MCF 10A (cell line): ENCODE measurements at regions of chr2 and their contacts with region 1.

Region 1: DNA sequence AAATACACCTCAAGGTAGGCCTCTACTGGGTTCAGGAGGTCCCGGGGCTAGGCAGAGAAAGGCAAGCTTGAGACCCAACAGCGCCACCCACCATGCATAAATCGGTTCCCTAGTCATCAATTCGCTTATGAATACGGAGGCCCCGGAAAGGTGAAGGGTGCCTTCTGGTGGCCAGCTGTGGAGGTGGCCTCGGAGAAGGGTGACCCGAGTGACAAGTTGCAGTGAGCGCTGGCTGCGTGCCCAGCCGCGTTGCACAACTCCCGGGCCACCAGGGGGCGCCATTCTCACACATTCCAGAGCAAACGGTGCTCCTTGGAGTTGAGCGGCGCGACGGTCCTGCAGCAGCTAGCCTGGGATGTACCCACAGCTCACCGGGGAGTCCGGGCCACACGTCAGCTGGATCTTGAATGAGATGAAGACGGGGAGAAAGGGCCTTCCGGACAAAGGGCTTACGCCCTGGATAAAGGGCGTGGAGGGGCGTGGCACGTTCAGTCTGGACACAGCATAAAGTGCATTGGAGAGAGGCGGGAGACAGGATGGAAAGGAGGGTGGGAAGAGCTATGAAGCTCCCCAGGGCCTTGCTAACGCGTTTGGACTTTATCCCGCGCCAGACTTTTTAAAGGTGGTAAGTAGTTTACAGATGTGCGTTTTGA is 20.4 kb downstream of the TMSB10 start:
- DNase-seq: peak; percentile 97
- H3K4me3 Mint-ChIP-seq: peak overlapping the region; percentile 71
- H3K27ac Mint-ChIP-seq: peak overlapping the region; percentile 28
- H3K4me1 Mint-ChIP-seq: peaks cover 32% of the 10 kb centered on the region
- H3K27me3 Mint-ChIP-seq: no peaks in the 10 kb centered on the region
- CTCF ChIP-seq: peak; percentile 96

Region 2: GRCh38 chr2:84631047-84631446 is 294.8 kb before region 1 on chr2:
- CTCF ChIA-PET with region 1: no interaction called
- POLR2A ChIA-PET with region 1: no interaction called
- intact Hi-C with region 1: loop called (anchors 1 kb)
- DNase-seq: peak; percentile 47
- H3K4me3 Mint-ChIP-seq: no peak overlapping the region
- H3K27ac Mint-ChIP-seq: no peak overlapping the region
- H3K4me1 Mint-ChIP-seq: peaks cover 5% of the 10 kb centered on the region
- H3K27me3 Mint-ChIP-seq: no peaks in the 10 kb centered on the region
- CTCF ChIP-seq: peak; percentile 70

Region 3: GRCh38 chr2:84894758-84895520 is 30.9 kb before region 1 on chr2:
- CTCF ChIA-PET with region 1: interaction called, 17 read pairs
- POLR2A ChIA-PET with region 1: interaction called, 15 read pairs
- intact Hi-C with region 1: no loop called
- DNase-seq: peak; percentile 55
- H3K4me3 Mint-ChIP-seq: no peak overlapping the region
- H3K27ac Mint-ChIP-seq: peak overlapping the region; percentile 41
- H3K4me1 Mint-ChIP-seq: peaks cover 30% of the 10 kb centered on the region
- H3K27me3 Mint-ChIP-seq: no peaks in the 10 kb centered on the region
- CTCF ChIP-seq: no peak

Region 4: DNA sequence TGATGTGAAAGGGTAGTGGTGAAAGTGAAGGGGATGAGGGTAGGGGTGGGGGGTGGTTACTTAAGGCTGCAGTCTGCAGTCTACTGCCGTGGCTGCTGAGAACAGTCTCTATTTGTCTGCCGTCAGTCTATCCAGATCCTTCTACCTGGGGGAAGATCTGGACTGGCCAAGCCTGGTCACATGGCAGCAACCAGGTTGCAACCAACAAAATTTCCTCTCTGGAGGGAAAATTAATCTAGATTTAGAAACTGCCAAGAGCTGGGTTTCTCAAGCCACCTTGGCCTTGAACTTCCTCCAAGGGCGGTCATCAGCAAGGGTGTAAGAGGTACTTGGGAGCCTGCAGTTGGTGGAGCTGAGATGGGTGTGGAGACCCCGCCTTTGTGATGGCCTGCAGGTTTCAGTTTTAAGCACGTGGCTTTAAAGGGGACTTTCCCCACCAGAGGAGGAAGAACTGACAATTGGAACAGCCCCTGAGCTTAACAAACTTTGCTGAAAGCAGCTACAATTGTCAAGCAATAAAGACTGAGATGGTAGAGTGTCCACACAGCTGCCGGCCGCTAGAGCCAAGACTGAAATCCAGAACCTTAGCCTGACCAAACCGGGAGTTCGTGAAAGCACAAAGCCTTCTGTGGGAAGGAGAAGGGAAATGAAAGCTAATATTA is 13.7 kb after region 1 on chr2:
- CTCF ChIA-PET with region 1: interaction called, 64 read pairs
- POLR2A ChIA-PET with region 1: interaction called, 4 read pairs
- intact Hi-C with region 1: no loop called
- DNase-seq: no peak
- H3K4me3 Mint-ChIP-seq: no peak overlapping the region
- H3K27ac Mint-ChIP-seq: peak overlapping the region; percentile 54
- H3K4me1 Mint-ChIP-seq: peaks cover 11% of the 10 kb centered on the region
- H3K27me3 Mint-ChIP-seq: no peaks in the 10 kb centered on the region
- CTCF ChIP-seq: no peak

Region 5: GRCh38 chr2:84970868-84971509 is 45.1 kb after region 1 on chr2 and contains the start of gene KCMF1:
- CTCF ChIA-PET with region 1: interaction called, 23 read pairs
- POLR2A ChIA-PET with region 1: interaction called, 46 read pairs
- intact Hi-C with region 1: loop called (anchors 2 kb)
- DNase-seq: peak; percentile 69
- H3K4me3 Mint-ChIP-seq: peak within 1 kb of the TSS; percentile 97
- H3K27ac Mint-ChIP-seq: peak within 1 kb of the TSS; percentile 97
- H3K4me1 Mint-ChIP-seq: peaks cover 12% of the 10 kb centered on the region
- H3K27me3 Mint-ChIP-seq: no peaks in the 10 kb centered on the region
- CTCF ChIP-seq: no peak
- total RNA-seq, gene KCMF1: 169 and 170 TPM in 2 replicates

Region 6: DNA sequence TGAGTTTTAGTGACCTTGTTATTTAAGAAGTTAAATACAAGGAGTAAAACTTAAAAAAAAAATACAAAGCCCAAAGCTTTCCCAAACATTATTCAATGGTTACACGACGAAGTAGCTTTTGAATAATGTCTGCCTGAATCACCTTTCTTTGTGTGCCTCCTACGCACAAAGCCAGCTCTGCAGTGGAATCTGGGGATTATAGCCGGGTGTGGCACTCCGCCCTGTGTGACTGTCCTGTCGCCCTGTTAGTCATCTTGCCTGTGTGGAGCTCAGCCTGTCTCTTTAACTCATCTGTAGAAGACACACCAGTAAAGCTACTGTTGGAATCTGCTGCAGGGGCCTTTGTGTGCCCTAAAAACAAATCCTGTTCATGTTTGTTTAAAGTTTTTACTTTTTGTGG is 128.0 kb after region 1 on chr2:
- CTCF ChIA-PET with region 1: interaction called, 13 read pairs
- POLR2A ChIA-PET with region 1: interaction called, 5 read pairs
- intact Hi-C with region 1: no loop called
- DNase-seq: peak; percentile 66
- H3K4me3 Mint-ChIP-seq: peak overlapping the region; percentile 6
- H3K27ac Mint-ChIP-seq: peak overlapping the region; percentile 68
- H3K4me1 Mint-ChIP-seq: peaks cover 25% of the 10 kb centered on the region
- H3K27me3 Mint-ChIP-seq: no peaks in the 10 kb centered on the region
- CTCF ChIP-seq: no peak

Region 7: GRCh38 chr2:85302121-85302520 is 376.3 kb after region 1 on chr2:
- CTCF ChIA-PET with region 1: interaction called, 10 read pairs
- POLR2A ChIA-PET with region 1: no interaction called
- intact Hi-C with region 1: no loop called
- DNase-seq: no peak
- H3K4me3 Mint-ChIP-seq: no peak overlapping the region
- H3K27ac Mint-ChIP-seq: no peak overlapping the region
- H3K4me1 Mint-ChIP-seq: no peaks in the 10 kb centered on the region
- H3K27me3 Mint-ChIP-seq: no peaks in the 10 kb centered on the region
- CTCF ChIP-seq: no peak